ENCODE measurements at regions of chrX and their contacts with region 1.

Region 1: DNA sequence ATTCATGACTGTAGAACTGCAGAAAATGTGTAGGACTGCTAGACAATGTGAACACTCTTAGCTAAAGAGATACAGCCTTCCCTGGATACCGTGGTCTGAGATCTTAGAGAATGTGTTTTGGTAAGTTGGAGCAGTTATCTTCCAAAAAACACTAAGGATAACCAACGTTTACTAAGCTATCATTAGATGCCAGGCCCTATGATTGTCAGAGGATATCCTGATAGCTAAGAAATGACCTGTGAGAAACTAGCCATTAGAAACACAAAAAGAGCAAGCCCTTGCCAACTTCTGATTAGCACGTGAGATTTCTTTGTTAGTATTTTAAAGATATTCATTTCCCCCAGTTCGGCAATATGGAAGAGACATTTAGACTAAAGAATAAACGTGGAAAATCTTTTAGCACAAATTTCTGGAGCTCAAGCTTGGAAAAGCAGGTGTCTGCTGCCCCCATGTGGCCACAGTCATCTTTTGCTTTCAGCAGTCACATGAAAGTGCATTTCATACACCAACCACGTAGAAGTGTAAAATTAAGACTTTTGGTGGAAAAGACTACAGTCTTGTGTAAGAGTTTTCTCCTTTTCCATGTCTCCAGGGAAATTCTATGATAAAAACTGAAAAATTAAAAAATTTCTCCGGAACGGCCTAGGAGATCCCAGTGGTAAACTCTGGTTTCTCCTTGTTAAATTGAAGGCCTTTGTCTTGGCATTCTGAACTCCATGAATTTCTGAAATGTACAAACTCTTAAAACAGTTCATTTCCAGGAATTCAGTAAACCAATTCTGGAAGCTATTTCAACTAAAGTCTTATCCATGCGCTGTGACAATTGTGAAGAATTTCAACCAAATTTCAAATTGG is 136.4 kb downstream of the ZNF674 start:
- DNase-seq: peak; percentile 60 to 96 (median 76)

Region 2: GRCh38 chrX:45322382-45322781 is 1086.4 kb before region 1 on chrX:
- intact Hi-C with region 1: loop called (anchors 10 kb)
- DNase-seq: peak in 5 of 10 donors; percentile 4 to 72 (median 8)

Region 3: GRCh38 chrX:45515262-45516215 is 893.2 kb before region 1 on chrX:
- intact Hi-C with region 1: loop called (anchors 10 kb)
- DNase-seq: peak in 9 of 10 donors; percentile 14 to 87 (median 38)

Measured in posterior cingulate gyrus (tissue), 11 donors.